Uterus (tissue), 4 donors: ENCODE measurements at regions of chr6 and their contacts with region 1.

Region 1: DNA sequence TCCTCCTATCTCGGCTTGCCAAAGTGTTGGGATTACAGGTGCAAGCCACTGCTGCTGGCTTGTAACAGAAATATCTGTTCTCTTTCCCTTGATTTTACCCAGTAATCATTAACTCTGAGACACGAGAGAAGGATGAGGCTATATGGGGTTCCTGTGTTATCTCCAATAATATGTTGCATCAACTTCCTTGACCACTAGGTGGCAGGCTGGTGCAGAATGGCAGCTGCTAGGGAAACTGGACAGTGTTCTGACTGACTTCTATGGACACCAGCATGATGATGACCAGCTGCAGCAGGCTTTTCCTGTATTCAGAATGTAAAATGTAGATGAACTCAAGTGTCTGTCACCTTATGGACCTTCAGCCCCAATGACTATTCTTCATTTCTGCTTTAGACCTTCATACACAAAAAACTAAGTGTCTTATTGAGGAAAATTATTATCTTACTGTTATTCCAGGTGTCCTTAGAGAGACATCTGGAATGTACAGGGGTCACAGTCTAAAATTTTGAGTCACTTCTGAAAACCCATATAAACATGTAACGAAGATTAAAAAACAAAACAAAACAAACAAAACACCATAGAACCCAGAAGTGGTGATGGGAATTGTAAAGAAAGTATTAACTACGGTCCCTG is 20.4 kb upstream of the CD109 start:
- DNase-seq: peak; percentile 68 to 83
- H3K4me3 ChIP-seq: no peak overlapping the region
- H3K27ac ChIP-seq: no peak overlapping the region
- H3K4me1 ChIP-seq: no peaks in the 10 kb centered on the region
- H3K27me3 ChIP-seq: no peaks in the 10 kb centered on the region
- CTCF ChIP-seq: peak; percentile 81 to 89 (median 86)
- POLR2A ChIP-seq: no peak

Region 2: DNA sequence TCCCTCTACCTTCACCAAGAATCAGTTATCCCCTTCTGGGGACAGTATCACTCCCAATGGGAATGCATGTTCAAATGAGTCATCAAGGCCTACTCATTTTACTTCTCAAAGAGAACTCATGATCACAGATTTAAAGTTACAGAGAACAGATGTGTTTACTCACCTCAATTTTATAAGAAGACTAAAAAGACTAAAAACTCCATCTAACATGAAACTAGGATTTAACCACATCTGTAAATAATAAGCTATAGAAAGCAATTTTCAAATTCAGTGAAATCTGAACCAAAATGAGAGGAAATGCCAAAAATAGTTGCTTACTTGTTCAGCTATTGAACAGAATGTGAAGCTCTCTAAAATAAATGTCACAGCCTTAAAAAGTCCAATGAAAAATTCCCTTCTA is 1353.8 kb before region 1 on chr6:
- intact Hi-C with region 1: no loop called
- DNase-seq: no peak
- H3K4me3 ChIP-seq: no peak overlapping the region
- H3K27ac ChIP-seq: no peak overlapping the region
- H3K4me1 ChIP-seq: no peaks in the 10 kb centered on the region
- H3K27me3 ChIP-seq: no peaks in the 10 kb centered on the region
- CTCF ChIP-seq: no peak
- POLR2A ChIP-seq: no peak

Region 3: DNA sequence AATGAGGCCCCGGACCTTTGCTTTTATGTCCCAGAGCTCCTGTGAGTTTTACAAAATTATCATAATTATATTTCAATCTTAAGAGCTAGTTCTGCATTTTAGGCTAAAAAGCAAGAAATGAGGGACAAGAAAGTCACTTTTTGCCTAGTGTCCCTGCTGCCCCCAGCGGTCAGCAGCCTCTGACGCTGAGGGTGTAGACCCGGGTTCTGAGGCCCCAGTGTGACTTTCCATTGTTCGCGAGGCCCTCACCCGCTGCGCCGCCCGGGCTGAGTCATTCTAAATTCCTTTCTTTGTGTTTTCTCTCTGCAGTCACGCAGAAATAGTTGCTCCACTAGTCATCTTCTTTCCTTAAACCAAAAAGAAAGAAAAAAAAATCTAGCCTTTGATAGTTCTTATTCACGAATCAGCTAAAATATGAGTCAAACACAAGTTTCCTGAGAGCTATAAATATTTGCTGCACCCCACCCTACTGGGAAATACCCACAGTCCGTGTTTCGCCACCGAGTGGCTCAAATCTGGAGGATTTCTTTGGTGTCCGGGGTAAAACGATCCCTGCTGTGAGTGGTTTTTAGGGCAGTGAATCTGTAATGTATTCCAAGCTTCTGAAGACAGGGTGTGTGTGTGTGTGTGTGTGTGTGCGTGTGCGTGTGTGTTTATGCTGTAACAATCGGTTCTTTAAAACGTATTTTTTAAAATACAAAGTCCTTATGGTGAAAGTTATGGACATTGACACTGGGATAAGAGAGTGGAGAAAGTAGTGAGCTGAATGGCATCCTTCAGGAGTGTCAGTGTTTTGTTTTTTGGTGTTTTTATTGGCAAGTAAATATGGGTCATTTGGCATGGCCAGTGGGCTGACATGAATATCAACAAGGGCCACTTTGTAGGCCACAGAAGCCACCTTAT is 95.1 kb before region 1 on chr6:
- intact Hi-C with region 1: no loop called
- DNase-seq: peak; percentile 84 to 89
- H3K4me3 ChIP-seq: peak overlapping the region; percentile 25 to 27
- H3K27ac ChIP-seq: peak overlapping the region; percentile 96 to 100
- H3K4me1 ChIP-seq: peaks cover 5 to 7% of the 10 kb centered on the region in 2 donors
- H3K27me3 ChIP-seq: no peaks in the 10 kb centered on the region
- CTCF ChIP-seq: peak; percentile 36 to 44 (median 40)
- POLR2A ChIP-seq: peak; percentile 21 to 48

Region 4: DNA sequence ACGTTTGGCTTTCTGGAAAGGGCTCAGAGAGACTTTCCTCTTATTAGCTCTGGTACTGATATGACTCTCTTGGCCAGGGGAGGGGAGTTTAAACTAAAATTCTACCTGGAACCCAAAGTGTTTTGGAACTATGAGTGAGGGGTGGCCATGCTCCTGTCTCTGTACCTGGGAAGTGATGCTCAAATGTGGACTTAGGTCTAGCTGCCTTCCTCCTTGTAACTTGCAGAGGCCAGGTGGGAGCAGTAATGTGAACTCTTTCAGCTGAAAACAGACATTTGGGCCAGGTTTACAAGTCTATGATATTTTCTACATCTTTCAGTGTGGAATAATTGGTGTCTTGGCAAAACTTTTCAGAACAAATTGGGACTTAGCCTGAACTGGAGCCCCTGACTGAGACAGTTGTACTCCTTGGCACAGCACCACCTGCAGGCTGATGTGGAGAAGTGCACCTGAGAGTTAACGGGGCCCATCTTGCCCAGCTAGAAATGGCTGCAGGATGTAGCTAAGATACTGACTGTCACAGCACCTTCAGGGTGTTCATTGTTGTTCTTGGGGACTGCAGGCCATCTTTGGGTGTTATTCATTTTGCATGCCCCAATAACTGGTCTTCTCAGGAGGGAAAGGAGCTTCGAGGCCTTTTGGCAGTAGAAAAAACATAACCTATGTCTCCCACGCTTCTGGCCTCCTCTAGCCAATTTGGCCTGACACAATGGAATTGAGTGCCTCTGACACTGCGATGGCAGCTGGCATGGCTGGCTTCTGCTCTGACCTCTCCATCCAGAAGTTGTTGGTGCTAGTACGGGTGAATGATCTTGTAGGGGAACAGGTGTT is 57.5 kb after region 1 on chr6:
- intact Hi-C with region 1: loop called (anchors 5 kb)
- DNase-seq: peak; percentile 69 to 71
- H3K4me3 ChIP-seq: no peak overlapping the region
- H3K27ac ChIP-seq: no peak overlapping the region
- H3K4me1 ChIP-seq: no peaks in the 10 kb centered on the region
- H3K27me3 ChIP-seq: no peaks in the 10 kb centered on the region
- CTCF ChIP-seq: peak; percentile 76 to 92 (median 86)
- POLR2A ChIP-seq: no peak